ENCODE measurements at regions of chr13 and their contacts with region 1.

Region 1: GRCh38 chr13:99033814-99034213 is 56.0 kb upstream of the DOCK9 start:
- DNase-seq: no peak
- H3K4me3 ChIP-seq: no peak overlapping the region
- H3K27ac ChIP-seq: peak overlapping the region in 2 of 4 donors; percentile 8 to 15
- H3K4me1 ChIP-seq: peaks cover 4 to 48% (median 43%) of the 10 kb centered on the region in 4 donors
- H3K27me3 ChIP-seq: no peaks in the 10 kb centered on the region
- CTCF ChIP-seq: peak; percentile 64 to 72 (median 70)
- EP300 ChIP-seq: no peak
- POLR2A ChIP-seq: no peak

Region 2: DNA sequence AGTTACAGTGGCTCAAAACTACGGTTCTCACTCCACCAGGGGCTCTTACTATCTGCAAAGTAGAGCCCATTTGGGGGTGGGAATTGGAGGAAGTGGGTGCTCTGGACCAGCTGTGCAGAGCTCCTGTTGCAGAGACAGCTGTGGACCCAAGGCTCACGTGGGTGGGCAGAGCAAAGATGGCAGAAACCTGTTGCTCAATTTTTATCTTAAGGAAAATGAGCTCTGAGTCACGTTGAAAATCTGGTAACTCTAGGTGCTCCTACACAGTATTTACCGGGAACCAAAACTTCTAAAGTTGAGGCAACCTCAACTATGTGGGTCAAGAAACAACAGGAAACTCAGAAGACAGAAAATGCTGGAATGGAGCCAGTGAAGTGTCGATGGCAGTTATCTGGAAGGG is 251.2 kb before region 1 on chr13:
- intact Hi-C with region 1: no loop called
- DNase-seq: no peak
- H3K4me3 ChIP-seq: no peak overlapping the region
- H3K27ac ChIP-seq: no peak overlapping the region
- H3K4me1 ChIP-seq: no peaks in the 10 kb centered on the region
- H3K27me3 ChIP-seq: peaks cover 0 to 2% (median 0%) of the 10 kb centered on the region in 4 donors
- CTCF ChIP-seq: no peak
- EP300 ChIP-seq: no peak
- POLR2A ChIP-seq: no peak

Region 3: DNA sequence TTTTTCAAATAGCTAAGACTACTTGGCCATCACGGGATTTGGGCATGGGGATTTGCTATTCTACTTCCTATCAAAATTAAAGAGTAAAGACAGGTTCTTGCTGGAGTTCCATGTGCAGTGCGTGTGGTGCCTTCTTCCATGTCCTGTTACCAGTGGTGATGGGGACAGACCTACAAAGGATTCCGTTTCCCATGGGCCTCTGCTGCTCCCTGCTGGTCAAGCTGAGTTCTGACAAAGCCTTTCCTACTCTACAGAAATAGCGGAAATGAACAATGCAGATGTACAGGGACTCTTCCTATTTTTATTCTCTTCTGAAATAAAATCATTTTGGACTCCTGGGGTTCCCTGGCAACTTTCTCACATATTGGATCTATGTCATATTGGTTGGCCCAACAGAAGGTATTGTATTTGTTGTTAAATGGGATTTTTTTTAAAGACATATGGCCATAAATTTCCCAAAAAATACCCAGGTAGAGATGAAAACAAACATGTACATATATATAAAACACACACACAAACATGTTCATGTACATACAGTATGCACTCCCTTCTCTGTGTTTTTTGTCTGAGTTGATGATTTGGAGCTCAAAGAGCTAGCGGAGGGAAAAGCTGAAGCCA is 190.8 kb before region 1 on chr13:
- intact Hi-C with region 1: loop called (anchors 2 kb)
- DNase-seq: peak; percentile 91
- H3K4me3 ChIP-seq: no peak overlapping the region
- H3K27ac ChIP-seq: no peak overlapping the region
- H3K4me1 ChIP-seq: peaks cover 10 to 36% (median 26%) of the 10 kb centered on the region in 4 donors
- H3K27me3 ChIP-seq: no peaks in the 10 kb centered on the region
- CTCF ChIP-seq: peak; percentile 74 to 92 (median 79)
- EP300 ChIP-seq: no peak
- POLR2A ChIP-seq: no peak

Region 4: DNA sequence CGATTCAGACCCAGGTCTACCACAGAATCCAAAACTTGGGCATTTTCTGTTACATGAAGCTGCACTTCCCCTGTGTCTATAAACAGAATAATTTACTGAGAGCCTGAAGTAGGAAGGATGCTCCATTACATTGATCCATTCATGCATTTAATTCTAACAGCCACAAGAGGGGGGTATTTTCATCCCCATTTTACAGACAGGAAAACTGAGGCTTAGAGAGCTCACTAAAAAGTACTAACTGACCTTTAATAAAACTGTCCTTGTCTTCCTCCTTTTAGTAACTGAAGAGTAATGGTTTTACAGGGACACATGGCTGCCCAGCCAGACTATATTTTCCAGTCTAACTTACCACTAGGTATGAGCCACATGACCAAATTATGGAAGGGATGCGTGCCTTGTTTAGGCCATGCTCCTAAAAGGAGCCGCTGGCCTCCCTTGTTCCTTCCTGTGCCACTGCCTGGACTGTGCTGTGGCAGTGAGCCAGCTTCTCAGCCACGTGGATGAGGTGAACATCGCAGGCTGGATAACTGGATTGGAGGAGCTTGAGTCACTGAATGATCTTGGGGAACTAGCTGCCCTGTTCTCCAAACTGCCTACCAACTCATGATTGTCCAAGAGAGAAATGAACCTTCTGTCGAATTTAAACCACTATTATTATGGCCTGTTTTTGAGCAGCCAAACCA is 164.3 kb before region 1 on chr13:
- intact Hi-C with region 1: loop called (anchors 10 kb)
- DNase-seq: no peak
- H3K4me3 ChIP-seq: no peak overlapping the region
- H3K27ac ChIP-seq: peak overlapping the region in 3 of 4 donors; percentile 1 to 45 (median 8)
- H3K4me1 ChIP-seq: peaks cover 0 to 8% (median 3%) of the 10 kb centered on the region in 4 donors
- H3K27me3 ChIP-seq: no peaks in the 10 kb centered on the region
- CTCF ChIP-seq: peak in 1 of 3 experiments; percentile 10
- EP300 ChIP-seq: no peak
- POLR2A ChIP-seq: no peak

Region 5: DNA sequence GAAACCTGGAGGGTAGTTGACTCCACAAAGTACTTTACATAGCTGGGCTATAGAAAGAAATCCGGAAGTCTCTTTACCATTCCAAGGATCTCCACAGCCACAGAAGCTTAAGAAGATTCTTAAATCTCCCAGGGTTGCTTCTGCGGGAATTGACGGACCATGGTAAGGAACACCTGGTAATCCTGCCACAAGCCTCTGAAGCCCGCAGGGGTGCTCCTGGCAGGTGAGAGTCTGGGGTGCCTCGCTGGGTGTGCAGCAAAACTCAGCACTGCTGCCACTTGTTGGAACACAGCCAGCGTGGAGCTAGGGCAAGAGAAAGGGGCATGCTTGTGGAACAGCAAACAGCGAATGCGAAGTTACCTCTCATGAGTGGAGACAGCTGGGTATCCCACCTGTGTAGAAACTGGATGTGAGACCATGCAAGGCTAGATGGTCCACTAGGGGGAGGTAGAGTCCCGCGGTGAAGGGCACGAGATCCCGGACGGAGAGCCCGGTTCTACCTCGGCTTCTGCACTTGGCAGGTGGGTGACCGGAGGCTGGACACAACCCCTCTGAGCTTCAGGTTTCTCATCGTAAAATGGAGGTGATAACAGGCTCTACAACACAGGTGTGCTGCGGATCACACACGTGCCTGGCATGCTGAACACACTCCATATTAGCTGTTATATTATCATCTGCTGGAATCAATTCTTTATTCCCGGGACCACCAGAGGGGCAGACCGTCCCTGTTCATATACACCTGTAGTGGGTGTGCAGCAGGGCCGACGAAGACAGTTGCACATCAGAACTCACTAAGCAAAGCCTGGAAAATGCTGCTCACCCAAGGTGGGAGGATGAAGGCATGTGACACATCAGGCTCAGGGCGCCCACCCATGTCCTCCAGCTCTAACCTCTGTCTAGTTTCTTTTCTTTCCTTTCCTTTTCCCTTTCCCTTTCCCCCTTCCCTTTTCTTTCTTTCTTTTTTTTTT is 142.8 kb after region 1 on chr13:
- intact Hi-C with region 1: no loop called
- DNase-seq: peak; percentile 95
- H3K4me3 ChIP-seq: no peak overlapping the region
- H3K27ac ChIP-seq: no peak overlapping the region
- H3K4me1 ChIP-seq: peaks cover 0 to 7% (median 7%) of the 10 kb centered on the region in 4 donors
- H3K27me3 ChIP-seq: peaks cover 0 to 14% (median 0%) of the 10 kb centered on the region in 4 donors
- CTCF ChIP-seq: peak; percentile 78 to 89 (median 89)
- EP300 ChIP-seq: no peak
- POLR2A ChIP-seq: no peak

Region 6: GRCh38 chr13:99269627-99270241 is 235.9 kb after region 1 on chr13:
- intact Hi-C with region 1: no loop called
- DNase-seq: no peak
- H3K4me3 ChIP-seq: no peak overlapping the region
- H3K27ac ChIP-seq: no peak overlapping the region
- H3K4me1 ChIP-seq: peaks cover 6 to 32% (median 15%) of the 10 kb centered on the region in 4 donors
- H3K27me3 ChIP-seq: no peaks in the 10 kb centered on the region
- CTCF ChIP-seq: peak; percentile 75 to 87 (median 78)
- EP300 ChIP-seq: no peak
- POLR2A ChIP-seq: no peak

Measured in esophagus muscularis mucosa (tissue), 4 donors.